AG04450 (cell line): ENCODE measurements at regions of chr22 and their contacts with region 1.

Region 1: DNA sequence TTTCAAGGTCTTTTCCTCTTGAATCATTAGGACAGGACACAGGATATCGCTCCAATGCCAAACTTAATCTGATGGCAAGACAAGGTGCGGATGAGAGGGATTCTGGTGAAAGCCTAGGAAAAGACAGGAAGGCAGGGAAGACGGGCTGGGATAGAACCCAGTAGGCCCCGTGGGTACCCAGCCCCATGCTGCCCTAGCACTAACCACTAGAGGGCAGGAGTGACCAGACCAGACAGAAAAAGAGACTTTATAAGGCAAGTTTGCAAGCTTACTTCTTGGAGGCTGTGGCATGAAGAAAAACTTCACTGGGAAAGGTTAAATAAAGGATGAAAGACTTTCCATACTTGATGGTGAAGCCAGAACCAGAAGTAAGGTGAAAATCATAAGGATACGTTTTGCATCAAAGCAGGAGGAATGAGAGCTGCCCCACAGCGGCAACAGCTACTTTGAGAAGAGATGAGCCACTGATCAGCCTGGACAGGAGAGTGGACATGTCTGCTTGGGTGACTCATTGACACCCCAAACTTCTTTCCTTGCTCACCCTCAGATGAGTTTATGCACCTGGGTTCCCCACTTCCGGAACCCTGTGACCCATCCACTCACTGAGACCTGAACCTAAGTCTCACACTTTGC is 39.8 kb downstream of the SYN3 start:
- DNase-seq: peak; percentile 10
- H3K4me3 ChIP-seq: no peak overlapping the region
- H3K27ac ChIP-seq: no peak overlapping the region
- H3K27me3 ChIP-seq: no peaks in the 10 kb centered on the region
- CTCF ChIP-seq: peak; percentile 93

Region 2: GRCh38 chr22:32509045-32509444 is 509.3 kb before region 1 on chr22:
- CTCF ChIA-PET with region 1: no interaction called
- POLR2A ChIA-PET with region 1: no interaction called
- DNase-seq: no peak
- H3K4me3 ChIP-seq: no peak overlapping the region
- H3K27ac ChIP-seq: no peak overlapping the region
- H3K27me3 ChIP-seq: peaks cover 8% of the 10 kb centered on the region
- CTCF ChIP-seq: no peak

Region 3: GRCh38 chr22:32745251-32745995 is 272.9 kb before region 1 on chr22:
- CTCF ChIA-PET with region 1: no interaction called
- POLR2A ChIA-PET with region 1: no interaction called
- DNase-seq: no peak
- H3K4me3 ChIP-seq: peak overlapping the region; percentile 14; the same call in 1 of the 2 replicates
- H3K27ac ChIP-seq: no peak overlapping the region
- H3K27me3 ChIP-seq: peaks cover 4% of the 10 kb centered on the region
- CTCF ChIP-seq: no peak

Region 4: DNA sequence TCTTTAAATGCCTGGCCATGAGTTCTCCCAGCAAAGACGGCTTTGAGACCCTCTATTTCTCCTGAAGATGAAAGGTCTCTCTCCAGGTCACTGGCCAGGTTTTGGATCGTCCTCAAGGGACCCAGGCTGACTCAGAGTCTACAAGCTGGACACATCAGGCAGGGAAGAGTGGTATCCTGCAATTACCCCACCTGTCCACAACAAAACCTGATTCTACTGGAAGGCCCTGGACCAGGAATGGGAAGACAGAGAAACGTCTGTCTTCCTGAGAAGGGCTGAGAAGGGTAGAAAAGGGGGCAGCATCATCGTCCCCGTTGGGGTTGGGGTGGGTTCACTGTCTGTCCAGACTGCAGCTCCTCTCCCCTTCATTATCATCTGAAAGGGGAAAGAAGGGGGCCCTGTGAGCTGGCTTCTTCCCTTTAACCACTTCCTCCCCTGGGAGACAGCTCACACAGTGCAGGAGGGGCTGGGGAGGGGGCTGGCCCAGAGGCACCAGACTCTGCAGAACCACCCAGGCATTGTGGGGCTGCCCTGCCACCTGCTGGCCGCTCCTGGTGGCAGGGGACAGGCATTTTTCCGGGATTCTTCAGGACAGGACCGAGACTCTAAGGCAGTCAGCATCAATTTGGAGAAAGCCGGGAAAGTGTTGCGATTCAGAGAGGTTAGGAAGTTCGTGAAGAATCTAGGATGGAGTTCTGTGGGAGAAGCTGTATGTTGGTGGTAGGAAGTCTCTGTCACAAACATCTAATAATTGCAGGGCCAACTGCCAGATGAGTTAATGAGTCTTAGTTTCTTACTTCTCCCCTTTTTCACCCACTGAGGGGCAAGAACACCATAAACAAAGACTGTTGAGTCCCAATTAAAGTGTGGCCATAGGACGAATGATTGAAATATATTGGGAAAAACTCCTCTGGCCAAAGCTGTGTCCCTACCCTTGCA is 17.7 kb before region 1 on chr22:
- CTCF ChIA-PET with region 1: interaction called, 13 read pairs
- POLR2A ChIA-PET with region 1: no interaction called
- DNase-seq: no peak
- H3K4me3 ChIP-seq: no peak overlapping the region
- H3K27ac ChIP-seq: no peak overlapping the region
- H3K27me3 ChIP-seq: peaks cover 13% of the 10 kb centered on the region
- CTCF ChIP-seq: peak; percentile 91

Region 5: DNA sequence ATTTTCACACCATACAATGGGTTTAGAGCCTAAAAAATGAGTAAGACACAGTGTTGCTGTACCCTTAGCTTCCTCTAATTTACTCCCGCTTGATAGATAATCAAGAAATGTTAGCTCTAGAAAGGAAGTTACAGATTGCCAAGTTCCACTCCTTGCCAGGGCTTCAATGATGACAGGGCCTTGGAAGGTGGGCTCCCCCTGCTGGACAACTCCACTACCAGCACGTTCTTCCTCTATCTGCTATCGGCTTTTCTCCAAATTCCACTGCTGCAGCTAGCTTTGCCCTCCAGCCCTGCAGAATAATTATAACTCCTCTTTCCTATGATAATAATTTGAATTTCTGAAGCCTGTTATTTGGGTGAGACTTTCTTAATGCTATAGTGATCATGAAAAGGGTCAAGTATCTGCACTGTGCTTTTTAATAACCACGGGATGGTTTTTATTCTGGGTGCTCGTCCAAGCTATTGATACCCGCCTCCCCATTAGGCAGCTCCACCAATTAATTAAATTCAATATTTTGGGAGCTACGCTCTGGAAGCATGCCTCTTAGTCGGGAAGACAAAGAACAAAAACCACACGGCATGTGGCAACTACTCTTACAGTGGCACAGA is 30.9 kb after region 1 on chr22:
- CTCF ChIA-PET with region 1: interaction called, 37 read pairs
- POLR2A ChIA-PET with region 1: no interaction called
- DNase-seq: peak; percentile 11
- H3K4me3 ChIP-seq: no peak overlapping the region
- H3K27ac ChIP-seq: no peak overlapping the region
- H3K27me3 ChIP-seq: peaks cover 7% of the 10 kb centered on the region
- CTCF ChIP-seq: peak; percentile 97

Region 6: DNA sequence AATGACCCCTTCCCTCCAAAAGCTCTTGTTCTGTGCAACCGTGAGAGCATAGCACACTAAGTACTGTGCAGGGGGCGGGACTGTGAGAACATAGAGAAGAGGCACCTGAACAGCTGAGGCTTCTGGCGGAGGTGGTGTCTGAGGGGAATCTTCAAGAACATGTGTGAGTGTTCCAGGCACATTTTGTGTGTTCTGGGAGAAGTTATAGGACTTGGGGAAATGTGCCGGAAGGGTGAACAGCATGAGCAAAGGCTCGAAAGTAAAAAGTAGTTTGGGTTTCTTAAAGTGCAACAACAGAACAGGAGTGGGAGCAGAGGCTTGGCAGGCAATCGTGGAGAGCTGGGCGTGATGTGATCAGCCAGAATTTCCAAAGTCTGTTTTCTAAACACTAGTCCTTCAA is 52.3 kb after region 1 on chr22:
- CTCF ChIA-PET with region 1: no interaction called
- POLR2A ChIA-PET with region 1: no interaction called
- DNase-seq: no peak
- H3K4me3 ChIP-seq: no peak overlapping the region
- H3K27ac ChIP-seq: no peak overlapping the region
- H3K27me3 ChIP-seq: no peaks in the 10 kb centered on the region
- CTCF ChIP-seq: no peak

Region 7: DNA sequence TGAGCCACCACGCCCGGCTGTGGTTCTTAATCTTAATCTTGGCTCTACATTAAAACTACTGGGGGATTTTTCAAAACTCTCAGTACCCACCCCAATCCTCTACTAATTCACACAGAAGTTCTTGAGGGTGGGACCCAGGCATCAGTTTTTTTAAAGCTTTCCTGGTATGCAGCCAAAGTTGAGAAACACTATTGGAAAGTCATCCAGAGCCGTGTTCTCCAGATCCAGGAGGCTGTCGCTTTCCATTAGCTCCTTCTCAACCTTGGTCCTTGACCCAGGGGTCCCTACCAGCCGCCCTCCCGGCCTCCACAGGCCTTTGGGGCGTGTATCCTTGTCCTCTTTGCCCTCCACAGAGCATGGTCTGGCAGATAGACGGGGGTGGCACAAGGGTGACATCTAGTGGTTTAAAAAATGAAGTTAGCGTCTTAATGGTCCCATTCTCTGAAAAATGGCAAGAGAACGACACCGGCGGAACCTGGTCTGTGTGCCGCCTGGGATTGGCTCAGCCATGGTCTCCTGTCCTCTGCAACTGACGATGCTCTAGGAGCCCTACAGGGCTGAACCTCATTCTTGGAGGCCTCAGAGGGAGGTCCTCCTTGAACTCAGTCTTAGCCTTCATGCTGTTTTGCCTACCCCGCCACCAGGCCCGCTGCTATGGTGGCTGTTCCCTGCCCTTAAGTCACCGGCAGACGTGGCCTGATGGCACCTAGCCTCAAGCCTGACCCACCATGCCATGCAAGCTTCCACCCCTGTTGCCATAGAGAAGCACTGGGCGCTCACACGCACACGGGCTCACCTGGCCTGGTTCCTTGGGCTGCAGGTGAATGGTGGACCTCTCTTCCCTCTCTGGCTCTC is 191.8 kb after region 1 on chr22:
- CTCF ChIA-PET with region 1: interaction called, 10 read pairs
- POLR2A ChIA-PET with region 1: no interaction called
- DNase-seq: no peak
- H3K4me3 ChIP-seq: no peak overlapping the region
- H3K27ac ChIP-seq: no peak overlapping the region
- H3K27me3 ChIP-seq: no peaks in the 10 kb centered on the region
- CTCF ChIP-seq: peak; percentile 56